ENCODE measurements at regions of chr12 and their contacts with region 1.

Region 1: DNA sequence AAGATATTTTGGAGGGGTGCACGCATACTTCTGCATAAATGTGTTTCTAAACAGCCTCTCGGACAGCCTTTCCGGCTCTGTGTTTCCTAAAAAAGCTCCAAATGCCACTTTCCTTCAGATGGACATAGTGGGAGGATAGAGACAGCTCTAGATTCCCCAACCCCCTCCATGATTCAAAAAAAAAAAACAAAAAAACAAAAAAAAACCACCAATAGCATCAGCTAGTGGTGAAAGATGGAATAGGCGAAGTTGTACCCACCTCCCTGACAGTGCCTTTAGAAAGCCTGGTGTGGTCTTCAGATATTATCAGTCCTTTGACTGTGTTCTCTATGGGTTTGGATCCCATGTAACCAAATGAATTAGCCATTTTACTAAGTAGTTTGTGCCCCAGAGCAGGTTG is 94.1 kb downstream of the PHETA1 start:
- DNase-seq: no peak
- ATAC-seq: peak; percentile 76
- H3K4me3 Mint-ChIP-seq: no peak overlapping the region
- H3K27ac Mint-ChIP-seq: no peak overlapping the region
- H3K4me1 Mint-ChIP-seq: peaks cover 3% of the 10 kb centered on the region; the same call in 1 of the 2 replicates
- H3K27me3 Mint-ChIP-seq: no peaks in the 10 kb centered on the region
- CTCF ChIP-seq: no peak

Region 2: GRCh38 chr12:111066744-111067437 is 207.9 kb before region 1 on chr12:
- CTCF ChIA-PET with region 1: no interaction called
- POLR2A ChIA-PET with region 1: no interaction called
- DNase-seq: no peak
- ATAC-seq: peak; percentile 81
- H3K4me3 Mint-ChIP-seq: no peak overlapping the region
- H3K27ac Mint-ChIP-seq: 0 out of 2 replicates have a peak overlapping the region, but pooled peaks have one; percentile 4
- H3K4me1 Mint-ChIP-seq: peaks cover 23% of the 10 kb centered on the region
- H3K27me3 Mint-ChIP-seq: no peaks in the 10 kb centered on the region
- CTCF ChIP-seq: no peak

Region 3: GRCh38 chr12:111211910-111212757 is 62.6 kb before region 1 on chr12:
- CTCF ChIA-PET with region 1: no interaction called
- POLR2A ChIA-PET with region 1: no interaction called
- DNase-seq: peak; percentile 67
- ATAC-seq: peak; percentile 75
- H3K4me3 Mint-ChIP-seq: no peak overlapping the region
- H3K27ac Mint-ChIP-seq: no peak overlapping the region
- H3K4me1 Mint-ChIP-seq: peaks cover 5% of the 10 kb centered on the region
- H3K27me3 Mint-ChIP-seq: no peaks in the 10 kb centered on the region
- CTCF ChIP-seq: no peak

Region 4: GRCh38 chr12:111287125-111287900 is 12.5 kb after region 1 on chr12:
- CTCF ChIA-PET with region 1: interaction called, 22 read pairs
- POLR2A ChIA-PET with region 1: interaction called, 3 read pairs
- DNase-seq: no peak
- ATAC-seq: no peak
- H3K4me3 Mint-ChIP-seq: no peak overlapping the region
- H3K27ac Mint-ChIP-seq: no peak overlapping the region; the same call in 1 of the 2 replicates
- H3K4me1 Mint-ChIP-seq: peaks cover 20% of the 10 kb centered on the region
- H3K27me3 Mint-ChIP-seq: no peaks in the 10 kb centered on the region
- CTCF ChIP-seq: no peak

Region 5: DNA sequence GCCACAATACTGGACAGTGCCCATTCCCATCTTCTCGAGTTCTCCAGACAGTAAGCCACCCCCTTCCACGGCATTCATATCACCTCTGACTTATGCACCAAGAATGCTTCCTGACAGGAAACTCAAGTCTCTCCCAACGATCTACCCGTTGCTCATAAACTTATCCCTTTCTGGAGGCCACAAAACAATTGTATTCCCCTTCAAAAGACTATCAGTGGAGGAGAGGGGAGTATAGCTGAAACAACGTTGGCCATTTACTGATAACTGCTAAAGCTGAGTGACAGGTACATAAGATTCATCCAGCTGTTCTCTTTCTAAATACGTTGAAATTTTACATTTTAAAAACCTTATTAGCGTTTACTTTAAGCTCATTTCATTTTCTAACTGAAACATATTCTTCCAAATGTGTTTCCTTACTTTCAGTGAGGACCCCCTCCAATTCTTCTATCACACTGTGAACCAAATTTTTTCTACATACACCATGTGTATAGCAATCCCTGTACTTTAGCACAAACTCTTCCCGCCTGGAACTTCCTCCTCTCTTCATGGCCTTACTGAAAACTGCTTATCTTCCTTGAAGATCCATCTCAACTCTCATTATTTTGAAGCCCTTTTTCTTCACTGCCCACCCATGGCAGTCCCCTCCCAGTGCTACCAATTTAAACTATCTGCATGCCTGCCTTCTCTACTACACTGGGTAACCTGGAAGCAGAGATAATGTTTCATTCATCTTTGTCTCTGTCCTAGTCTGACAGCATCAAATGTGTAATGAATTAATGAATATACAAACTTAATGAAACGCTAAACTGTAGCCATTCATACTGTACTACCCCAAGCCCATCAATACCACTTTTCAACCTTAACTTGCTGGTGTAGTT is 295.5 kb after region 1 on chr12:
- CTCF ChIA-PET with region 1: no interaction called
- POLR2A ChIA-PET with region 1: no interaction called
- DNase-seq: no peak
- ATAC-seq: no peak
- H3K4me3 Mint-ChIP-seq: no peak overlapping the region
- H3K27ac Mint-ChIP-seq: 0 out of 2 replicates have a peak overlapping the region, but pooled peaks have one; percentile 2
- H3K4me1 Mint-ChIP-seq: peaks cover 19% of the 10 kb centered on the region
- H3K27me3 Mint-ChIP-seq: no peaks in the 10 kb centered on the region
- CTCF ChIP-seq: no peak

Measured in WTC11 (cell line).